Prostate gland (tissue), 2 donors: ENCODE measurements at regions of chr9 and their contacts with region 1.

Region 1: GRCh38 chr9:130701056-130702022 is 7.8 kb downstream of the EXOSC2 start:
- DNase-seq: peak; percentile 84
- H3K4me3 ChIP-seq: no peak overlapping the region
- H3K27ac ChIP-seq: peak overlapping the region in 1 of 2 donors; percentile 14
- H3K4me1 ChIP-seq: no peaks in the 10 kb centered on the region
- H3K27me3 ChIP-seq: no peaks in the 10 kb centered on the region
- CTCF ChIP-seq: peak; percentile 83 to 94 (median 90)
- POLR2A ChIP-seq: no peak

Region 2: GRCh38 chr9:130498298-130498917 is 202.9 kb before region 1 on chr9:
- intact Hi-C with region 1: no loop called
- DNase-seq: no peak
- H3K4me3 ChIP-seq: no peak overlapping the region
- H3K27ac ChIP-seq: no peak overlapping the region
- H3K4me1 ChIP-seq: peaks cover 4% of the 10 kb centered on the region
- H3K27me3 ChIP-seq: no peaks in the 10 kb centered on the region
- CTCF ChIP-seq: no peak
- POLR2A ChIP-seq: no peak

Region 3: GRCh38 chr9:130770679-130771442 is 69.5 kb after region 1 on chr9:
- intact Hi-C with region 1: loop called (anchors 5 kb)
- DNase-seq: no peak
- H3K4me3 ChIP-seq: no peak overlapping the region
- H3K27ac ChIP-seq: no peak overlapping the region
- H3K4me1 ChIP-seq: no peaks in the 10 kb centered on the region
- H3K27me3 ChIP-seq: no peaks in the 10 kb centered on the region
- CTCF ChIP-seq: peak in 3 of 4 experiments; percentile 64 to 78 (median 73)
- POLR2A ChIP-seq: no peak

Region 4: DNA sequence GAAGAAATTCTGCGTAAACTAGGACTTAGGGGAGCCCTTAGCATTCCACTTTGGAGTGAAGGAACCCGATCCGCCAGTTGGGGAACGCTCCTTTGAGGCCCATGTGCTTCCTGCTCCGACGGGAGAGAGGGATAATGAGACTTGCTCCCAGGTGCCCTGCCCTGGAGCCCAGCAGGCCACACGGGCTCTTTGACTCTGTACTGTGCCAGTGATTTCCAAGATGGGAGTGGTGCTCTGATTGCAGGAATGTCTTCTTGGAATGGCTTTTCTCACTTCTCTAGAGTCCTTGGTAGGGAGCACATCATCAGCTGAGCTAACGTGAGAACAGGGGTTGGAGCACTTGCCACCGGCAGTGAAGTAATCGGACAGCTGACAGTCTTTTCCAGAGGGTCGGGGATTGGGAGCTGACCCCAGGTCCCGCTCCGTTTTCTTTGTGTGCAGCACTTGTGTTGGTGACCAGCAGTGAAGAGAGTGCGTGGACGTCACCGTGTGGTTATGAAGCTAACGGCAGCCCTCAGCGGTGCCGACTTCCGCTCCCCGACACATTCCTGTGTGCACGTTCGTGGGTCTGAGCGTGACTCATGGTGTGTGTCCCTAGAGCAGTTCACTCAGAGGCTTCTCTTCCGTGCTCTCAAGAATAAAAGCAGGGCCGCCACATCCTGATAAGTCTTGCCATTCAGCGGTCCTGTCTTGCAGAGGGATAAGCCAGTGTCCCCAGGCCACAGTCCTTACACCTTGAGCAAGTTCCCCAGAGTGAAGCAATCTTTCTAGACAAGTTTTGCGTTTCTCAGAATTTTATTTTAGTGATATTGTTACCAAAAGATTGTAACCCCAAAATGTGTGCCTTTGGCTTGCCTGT is 159.3 kb after region 1 on chr9:
- intact Hi-C with region 1: loop called (anchors 2 kb)
- DNase-seq: no peak
- H3K4me3 ChIP-seq: no peak overlapping the region
- H3K27ac ChIP-seq: peak overlapping the region; percentile 14 to 41
- H3K4me1 ChIP-seq: no peaks in the 10 kb centered on the region
- H3K27me3 ChIP-seq: no peaks in the 10 kb centered on the region
- CTCF ChIP-seq: peak in 3 of 4 experiments; percentile 14 to 47 (median 43)
- POLR2A ChIP-seq: no peak

Region 5: DNA sequence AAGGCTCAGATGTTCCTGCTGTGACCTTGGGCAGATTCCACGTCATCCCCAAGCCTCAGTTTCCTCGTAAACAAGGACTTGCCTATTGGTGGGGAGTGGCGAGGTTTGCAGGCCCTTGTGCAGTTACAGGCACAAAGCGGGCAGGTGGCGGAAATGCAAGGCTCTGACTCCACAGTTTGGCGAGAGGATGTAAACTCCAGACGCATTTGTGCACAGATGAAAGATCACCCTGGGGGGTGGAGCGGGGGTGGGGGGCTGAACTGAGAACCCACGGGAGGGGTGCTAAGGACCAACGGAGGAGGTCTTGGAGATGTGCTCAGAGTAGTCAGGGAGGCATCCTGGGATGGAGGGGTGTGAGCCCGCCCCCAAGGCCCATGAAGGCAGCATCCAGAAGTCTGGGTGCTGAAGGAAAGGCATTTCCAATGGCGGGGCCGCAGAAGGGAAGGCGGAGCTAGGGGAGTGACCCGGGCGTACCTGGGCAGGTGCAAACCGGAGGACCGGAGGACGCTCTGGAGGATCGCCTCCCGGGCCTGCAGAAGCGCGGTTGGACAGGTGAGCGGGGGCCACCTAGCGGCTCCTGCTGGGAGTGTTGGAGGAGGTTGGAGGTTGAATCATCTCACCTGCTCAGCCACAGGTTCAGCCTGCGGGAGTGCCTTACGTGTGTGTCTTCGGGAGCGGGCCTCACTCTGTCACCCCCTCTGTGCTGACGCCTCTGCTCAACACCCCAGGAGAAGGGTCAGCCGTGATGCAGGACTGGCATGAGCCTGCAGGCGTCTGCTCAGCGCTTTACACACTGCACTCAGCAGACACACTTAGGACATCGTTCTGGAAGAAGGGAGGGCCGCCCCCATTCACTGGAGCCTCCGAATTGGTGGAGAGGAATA is 239.6 kb after region 1 on chr9:
- intact Hi-C with region 1: loop called (anchors 5 kb)
- DNase-seq: peak; percentile 84
- H3K4me3 ChIP-seq: no peak overlapping the region
- H3K27ac ChIP-seq: no peak overlapping the region
- H3K4me1 ChIP-seq: peaks cover 7% of the 10 kb centered on the region
- H3K27me3 ChIP-seq: no peaks in the 10 kb centered on the region
- CTCF ChIP-seq: peak; percentile 52 to 94 (median 88)
- POLR2A ChIP-seq: no peak

Region 6: GRCh38 chr9:130997925-130998596 is 296.7 kb after region 1 on chr9:
- intact Hi-C with region 1: loop called (anchors 5 kb)
- DNase-seq: no peak
- H3K4me3 ChIP-seq: no peak overlapping the region
- H3K27ac ChIP-seq: no peak overlapping the region
- H3K4me1 ChIP-seq: no peaks in the 10 kb centered on the region
- H3K27me3 ChIP-seq: no peaks in the 10 kb centered on the region
- CTCF ChIP-seq: peak; percentile 45 to 70 (median 49)
- POLR2A ChIP-seq: no peak